CD4-positive, alpha-beta T cell (primary cell): ENCODE measurements at regions of chr15 and their contacts with region 1.

Region 1: DNA sequence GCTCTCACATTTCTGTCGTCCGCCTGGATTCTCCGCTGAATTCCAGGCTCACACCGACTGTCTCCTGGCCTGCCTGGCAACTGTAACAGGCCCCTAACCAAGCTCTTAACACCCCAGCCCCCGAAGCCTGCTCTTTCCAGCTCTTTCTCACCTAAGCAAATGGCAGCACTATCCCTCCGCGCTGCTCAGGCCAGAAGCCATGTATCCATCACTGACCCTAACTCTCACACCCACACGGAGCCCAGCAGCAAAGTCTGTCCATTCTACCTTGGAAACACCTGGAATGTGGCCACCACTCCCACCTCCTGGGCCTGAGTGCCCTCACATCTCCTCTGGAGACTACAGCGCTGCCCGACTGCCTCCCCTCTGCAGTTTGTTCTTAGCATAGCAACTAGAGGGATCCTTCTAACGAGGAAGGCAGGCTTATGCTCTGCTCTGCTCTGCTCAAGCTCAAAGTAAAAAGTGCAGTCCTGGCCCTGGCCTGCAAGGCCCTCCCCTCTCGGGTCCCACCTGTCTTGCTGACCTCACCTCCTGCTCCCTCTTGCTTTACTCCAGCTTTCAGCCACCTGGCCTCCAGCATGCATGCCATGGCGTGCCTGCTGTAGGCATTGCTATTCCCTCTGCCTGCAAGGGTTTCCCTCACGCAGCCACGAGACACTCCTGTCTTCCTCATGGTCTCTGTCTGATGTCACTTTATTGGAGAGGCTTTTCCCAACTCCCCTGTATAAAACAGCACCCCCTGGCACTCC is 27.2 kb downstream of the FEM1B start:
- DNase-seq: no peak
- ATAC-seq: no peak
- H3K4me3 ChIP-seq: no peak overlapping the region
- H3K4me3 Mint-ChIP-seq: no peak overlapping the region
- H3K27ac ChIP-seq: no peak overlapping the region
- H3K27ac Mint-ChIP-seq: no peak overlapping the region
- H3K4me1 ChIP-seq: peaks cover 8% of the 10 kb centered on the region
- H3K4me1 Mint-ChIP-seq: peaks cover 35% of the 10 kb centered on the region
- H3K27me3 ChIP-seq: peaks cover 0 to 4% of the 10 kb centered on the region in 2 experiments
- H3K27me3 Mint-ChIP-seq: no peaks in the 10 kb centered on the region
- CTCF ChIP-seq: no peak

Region 2: DNA sequence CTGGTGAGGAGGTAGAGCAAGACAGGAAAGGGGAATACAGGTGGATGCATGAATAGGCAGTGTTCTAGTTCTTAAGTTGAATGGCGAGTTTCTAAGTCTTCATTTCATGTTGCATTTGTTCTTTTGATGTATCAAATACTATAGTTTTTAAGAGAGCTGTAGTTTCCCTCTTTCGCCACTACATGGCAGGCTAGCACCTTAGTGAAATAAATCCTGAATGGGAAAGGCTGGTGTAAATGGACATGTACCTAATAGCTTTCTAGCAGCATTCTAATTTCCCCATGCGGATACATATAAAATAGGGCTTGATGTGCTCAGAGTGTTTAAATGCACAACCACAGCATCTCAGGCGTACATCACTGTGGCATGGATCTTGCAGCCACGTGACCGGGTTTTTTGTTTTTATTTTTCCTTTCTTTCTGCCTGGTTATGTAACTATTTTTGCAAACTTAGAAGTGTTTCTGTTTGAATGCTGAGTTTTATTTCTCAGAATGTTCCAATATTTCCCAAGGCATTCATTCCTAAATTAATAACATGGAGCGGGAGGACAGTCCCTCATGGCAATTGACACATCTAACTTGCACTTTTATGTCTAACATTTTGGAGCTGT is 51.7 kb before region 1 on chr15:
- CTCF ChIA-PET with region 1: interaction called, 32 read pairs
- POLR2A ChIA-PET with region 1: interaction called, 13 read pairs
- intact Hi-C with region 1: loop called (anchors 1 kb)
- DNase-seq: peak in 6 of 14 experiments; percentile 16 to 76 (median 60)
- ATAC-seq: peak; percentile 75
- H3K4me3 ChIP-seq: no peak overlapping the region
- H3K4me3 Mint-ChIP-seq: peak overlapping the region; percentile 44
- H3K27ac ChIP-seq: no peak overlapping the region
- H3K27ac Mint-ChIP-seq: no peak overlapping the region
- H3K4me1 ChIP-seq: peaks cover 9% of the 10 kb centered on the region
- H3K4me1 Mint-ChIP-seq: peaks cover 7% of the 10 kb centered on the region
- H3K27me3 ChIP-seq: no peaks in the 10 kb centered on the region
- H3K27me3 Mint-ChIP-seq: no peaks in the 10 kb centered on the region
- CTCF ChIP-seq: peak; percentile 89

Region 3: GRCh38 chr15:68328443-68328842 is 23.7 kb after region 1 on chr15:
- CTCF ChIA-PET with region 1: interaction called, 5 read pairs
- POLR2A ChIA-PET with region 1: interaction called, 21 read pairs
- intact Hi-C with region 1: loop called (anchors 1 to 2 kb)
- DNase-seq: peak in 7 of 14 experiments; percentile 6 to 19 (median 16)
- ATAC-seq: peak; percentile 92
- H3K4me3 ChIP-seq: no peak overlapping the region
- H3K4me3 Mint-ChIP-seq: peak overlapping the region; percentile 5
- H3K27ac ChIP-seq: no peak overlapping the region
- H3K27ac Mint-ChIP-seq: peak overlapping the region; percentile 82
- H3K4me1 ChIP-seq: peaks cover 15% of the 10 kb centered on the region
- H3K4me1 Mint-ChIP-seq: peaks cover 53% of the 10 kb centered on the region
- H3K27me3 ChIP-seq: no peaks in the 10 kb centered on the region
- H3K27me3 Mint-ChIP-seq: peaks cover 5% of the 10 kb centered on the region
- CTCF ChIP-seq: peak; percentile 34

Region 4: GRCh38 chr15:68344598-68344997 is 39.8 kb after region 1 on chr15:
- CTCF ChIA-PET with region 1: no interaction called
- POLR2A ChIA-PET with region 1: no interaction called
- intact Hi-C with region 1: no loop called
- DNase-seq: no peak
- ATAC-seq: no peak
- H3K4me3 ChIP-seq: no peak overlapping the region
- H3K4me3 Mint-ChIP-seq: no peak overlapping the region
- H3K27ac ChIP-seq: no peak overlapping the region
- H3K27ac Mint-ChIP-seq: no peak overlapping the region
- H3K4me1 ChIP-seq: no peaks in the 10 kb centered on the region
- H3K4me1 Mint-ChIP-seq: no peaks in the 10 kb centered on the region
- H3K27me3 ChIP-seq: no peaks in the 10 kb centered on the region
- H3K27me3 Mint-ChIP-seq: no peaks in the 10 kb centered on the region
- CTCF ChIP-seq: no peak

Region 5: GRCh38 chr15:68550481-68551295 is 245.9 kb after region 1 on chr15:
- CTCF ChIA-PET with region 1: no interaction called
- POLR2A ChIA-PET with region 1: interaction called, 5 read pairs
- intact Hi-C with region 1: loop called in 1 of 2 experiments (anchors 5 kb)
- DNase-seq: peak; percentile 58 to 82 (median 69)
- ATAC-seq: no peak
- H3K4me3 ChIP-seq: no peak overlapping the region
- H3K4me3 Mint-ChIP-seq: no peak overlapping the region
- H3K27ac ChIP-seq: no peak overlapping the region
- H3K27ac Mint-ChIP-seq: no peak overlapping the region
- H3K4me1 ChIP-seq: no peaks in the 10 kb centered on the region
- H3K4me1 Mint-ChIP-seq: no peaks in the 10 kb centered on the region
- H3K27me3 ChIP-seq: peaks cover 11 to 15% of the 10 kb centered on the region in 2 experiments
- H3K27me3 Mint-ChIP-seq: peaks cover 54% of the 10 kb centered on the region
- CTCF ChIP-seq: peak; percentile 94